Dorsolateral prefrontal cortex (tissue), 120 donors: ENCODE measurements at regions of chr16 and their contacts with region 1.

Region 1: GRCh38 chr16:71883849-71884638 is at the start of gene ZNF821:
- DNase-seq: peak; percentile 45 to 87 (median 68)
- H3K4me3 ChIP-seq: peak within 1 kb of the TSS; percentile 57 to 99 (median 90)
- H3K27ac ChIP-seq: peak within 1 kb of the TSS; percentile 67 to 99 (median 94)
- H3K27me3 ChIP-seq: no peaks in the 10 kb centered on the region
- CTCF ChIP-seq: peak in 41 of 56 donors; percentile 3 to 60 (median 37)
- total RNA-seq, gene ZNF821: 8.8 to 35.9 (median 22.5) TPM

Region 2: DNA sequence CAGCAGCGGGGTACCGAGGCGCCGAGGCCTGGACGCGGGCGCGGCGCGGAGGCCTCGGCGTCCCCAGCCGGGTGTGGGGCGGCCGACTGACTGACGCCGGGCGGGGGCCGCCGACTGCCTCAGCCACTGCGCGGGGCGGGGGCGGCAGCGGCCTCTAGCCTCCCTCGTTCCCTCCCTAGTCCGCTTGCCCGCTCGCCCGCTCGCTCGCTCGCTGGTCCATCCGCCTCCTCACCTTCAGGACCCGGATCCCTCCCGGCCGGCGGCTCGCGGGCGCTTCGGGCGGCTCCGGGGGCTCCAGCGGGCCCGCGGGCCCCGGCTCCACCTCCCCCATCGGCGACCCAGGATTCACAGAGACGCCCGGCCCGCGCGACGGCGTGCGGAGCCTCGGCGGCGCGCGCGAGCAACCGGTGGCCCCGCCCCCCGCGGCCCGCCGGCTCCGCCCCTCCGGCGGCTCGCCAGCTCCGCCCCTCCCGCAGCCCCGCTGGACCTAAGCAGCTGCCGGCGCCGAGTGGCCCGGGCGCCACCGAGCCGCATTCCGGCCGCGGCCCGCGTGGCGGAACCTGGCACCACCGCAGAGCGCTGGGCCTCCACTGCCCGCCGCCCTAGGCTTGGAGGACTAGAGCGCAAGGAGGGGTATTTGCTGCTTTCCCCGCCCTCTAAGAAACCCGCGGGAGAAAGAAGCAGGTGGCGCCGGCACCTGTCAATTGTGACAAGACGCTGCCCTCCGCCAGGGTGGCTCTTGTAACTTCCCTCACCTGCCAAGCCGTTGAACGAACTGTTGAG is 160.3 kb before region 1 on chr16:
- intact Hi-C with region 1: loop called in 1 of 2 experiments (anchors 10 kb)
- DNase-seq: peak; percentile 56 to 86 (median 74)
- H3K4me3 ChIP-seq: peak overlapping the region; percentile 59 to 98 (median 86)
- H3K27ac ChIP-seq: peak overlapping the region in 58 of 59 donors; percentile 46 to 94 (median 88)
- H3K27me3 ChIP-seq: no peaks in the 10 kb centered on the region
- CTCF ChIP-seq: peak in 19 of 56 donors; percentile 8 to 42 (median 27)

Region 3: GRCh38 chr16:71845639-71846430 is 38.2 kb before region 1 on chr16 and contains the start of gene ATXN1L:
- intact Hi-C with region 1: loop called (anchors 5 kb)
- DNase-seq: peak; percentile 73 to 97 (median 86)
- H3K4me3 ChIP-seq: peak within 1 kb of the TSS; percentile 69 to 100 (median 99)
- H3K27ac ChIP-seq: peak within 1 kb of the TSS; percentile 14 to 96 (median 85)
- H3K27me3 ChIP-seq: no peaks in the 10 kb centered on the region
- CTCF ChIP-seq: peak in 36 of 56 donors; percentile 14 to 56 (median 31)
- total RNA-seq, gene ATXN1L: 20.3 to 34.3 (median 26.3) TPM

Region 4: GRCh38 chr16:71961066-71962039 is 77.3 kb after region 1 on chr16:
- intact Hi-C with region 1: loop called in 1 of 2 experiments (anchors 5 kb)
- DNase-seq: peak; percentile 67 to 93 (median 87)
- H3K4me3 ChIP-seq: peak overlapping the region in 2 of 59 donors; percentile 6 to 9
- H3K27ac ChIP-seq: peak overlapping the region in 5 of 59 donors; percentile 6 to 55 (median 36)
- H3K27me3 ChIP-seq: no peaks in the 10 kb centered on the region
- CTCF ChIP-seq: peak; percentile 55 to 90 (median 82)

Region 5: GRCh38 chr16:72099377-72099818 is 215.4 kb after region 1 on chr16:
- intact Hi-C with region 1: loop called in 1 of 2 experiments (anchors 5 kb)
- DNase-seq: peak in 3 of 10 donors; percentile 28 to 63 (median 48)
- H3K4me3 ChIP-seq: no peak overlapping the region
- H3K27ac ChIP-seq: no peak overlapping the region
- H3K27me3 ChIP-seq: no peaks in the 10 kb centered on the region
- CTCF ChIP-seq: peak in 54 of 56 donors; percentile 22 to 77 (median 64)